PC-9 (cell line): ENCODE measurements at regions of chr2 and their contacts with region 1.

Region 1: GRCh38 chr2:27754138-27754588 is 17.4 kb upstream of the MRPL33 start:
- DNase-seq: peak; percentile 79 to 87
- H3K4me3 ChIP-seq: peak overlapping the region; percentile 43; the same call in 1 of the 2 replicates
- H3K27ac ChIP-seq: peak overlapping the region; percentile 96
- H3K4me1 ChIP-seq: peaks cover 39% of the 10 kb centered on the region
- H3K27me3 ChIP-seq: no peaks in the 10 kb centered on the region
- CTCF ChIP-seq: peak; percentile 96

Region 2: DNA sequence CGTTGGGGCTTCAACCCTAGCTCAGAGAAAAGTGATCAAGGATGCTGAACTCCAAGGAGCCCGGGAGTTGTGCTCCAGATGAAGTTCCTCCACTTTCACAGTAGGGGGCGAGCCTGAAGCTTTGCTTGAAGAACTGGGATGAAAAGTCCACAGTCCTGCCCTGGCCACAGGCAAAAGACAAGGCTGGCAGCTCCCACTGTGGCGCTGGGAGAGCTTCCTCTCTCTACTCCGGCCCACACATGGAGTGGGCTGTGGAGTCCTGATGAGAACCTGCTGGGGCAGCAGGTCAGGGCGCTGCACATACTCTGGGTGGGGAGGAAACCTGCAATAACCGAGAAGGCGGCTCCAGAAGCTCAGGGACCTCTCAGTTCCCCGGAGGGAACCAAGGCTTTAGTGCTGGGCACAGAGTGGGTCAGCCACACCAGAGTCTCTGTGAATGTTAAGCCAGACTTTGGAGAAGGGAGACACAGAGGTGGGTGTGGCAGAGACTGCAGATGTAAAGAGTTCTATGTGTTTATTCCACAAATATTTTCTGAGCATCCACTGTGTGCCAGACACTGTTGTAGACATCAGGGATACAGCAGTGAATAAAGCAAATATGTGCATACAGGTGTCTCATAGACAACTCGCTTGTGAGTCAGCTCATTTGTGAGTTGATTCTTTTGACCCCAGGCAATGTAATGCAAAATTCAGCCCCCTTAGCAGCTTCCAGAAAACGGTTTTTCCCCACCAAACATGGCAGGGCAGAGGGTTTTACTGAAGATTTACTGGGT is 30.6 kb before region 1 on chr2:
- CTCF ChIA-PET with region 1: interaction called, 23 read pairs
- POLR2A ChIA-PET with region 1: interaction called, 8 read pairs
- intact Hi-C with region 1: loop called (anchors 1 kb)
- DNase-seq: peak; percentile 52 to 55
- H3K4me3 ChIP-seq: no peak overlapping the region
- H3K27ac ChIP-seq: peak overlapping the region; percentile 92
- H3K4me1 ChIP-seq: peaks cover 64% of the 10 kb centered on the region
- H3K27me3 ChIP-seq: no peaks in the 10 kb centered on the region
- CTCF ChIP-seq: peak; percentile 91

Region 3: GRCh38 chr2:27954771-27955383 is 200.7 kb after region 1 on chr2:
- CTCF ChIA-PET with region 1: no interaction called
- POLR2A ChIA-PET with region 1: no interaction called
- intact Hi-C with region 1: loop called (anchors 5 kb)
- DNase-seq: peak; percentile 48 to 96
- H3K4me3 ChIP-seq: no peak overlapping the region; the same call in 1 of the 2 replicates
- H3K27ac ChIP-seq: peak overlapping the region; percentile 88
- H3K4me1 ChIP-seq: peaks cover 61% of the 10 kb centered on the region
- H3K27me3 ChIP-seq: no peaks in the 10 kb centered on the region
- CTCF ChIP-seq: peak; percentile 38; the same call in 1 of the 2 replicates

Region 4: DNA sequence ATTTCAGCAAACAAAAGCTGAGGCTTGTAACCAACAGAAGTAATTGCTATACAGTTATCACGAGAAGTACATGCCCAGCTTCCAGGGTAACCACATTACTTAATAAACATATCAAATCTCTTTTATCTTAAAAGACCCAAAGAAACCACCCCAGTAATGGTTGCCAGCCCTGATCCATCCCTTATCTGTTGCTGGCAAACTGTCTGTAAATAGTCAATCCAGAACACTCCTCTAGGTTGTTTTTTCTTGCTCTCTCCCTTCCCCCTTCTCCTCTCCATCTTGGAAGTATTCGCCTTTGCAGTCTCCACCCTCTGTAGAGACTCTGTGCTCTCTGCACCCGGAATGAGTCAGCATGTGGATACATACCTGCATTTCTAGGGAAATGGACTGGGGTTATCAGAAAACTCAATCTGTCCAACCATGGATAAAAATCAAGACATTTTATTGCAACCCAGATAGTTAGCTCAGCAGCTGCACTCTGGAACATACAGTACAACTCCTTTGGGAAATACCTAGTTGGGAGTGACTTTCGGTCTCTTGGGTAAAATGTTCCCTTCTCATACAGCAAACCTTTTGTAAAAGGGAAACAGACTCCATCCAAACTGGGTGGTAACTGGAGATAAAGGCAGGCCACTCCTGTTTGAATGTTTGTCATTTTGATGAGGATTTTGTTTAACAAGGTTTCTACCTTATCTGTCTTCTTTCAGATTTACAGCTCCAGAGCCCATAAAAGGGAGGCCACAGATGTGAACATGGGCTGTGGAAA is 515.0 kb after region 1 on chr2:
- CTCF ChIA-PET with region 1: no interaction called
- POLR2A ChIA-PET with region 1: no interaction called
- intact Hi-C with region 1: loop called (anchors 2 kb)
- DNase-seq: peak; percentile 61 to 93
- H3K4me3 ChIP-seq: peak overlapping the region; percentile 38; the same call in 1 of the 2 replicates
- H3K27ac ChIP-seq: peak overlapping the region; percentile 87
- H3K4me1 ChIP-seq: peaks cover 64% of the 10 kb centered on the region
- H3K27me3 ChIP-seq: no peaks in the 10 kb centered on the region
- CTCF ChIP-seq: no peak